A549 (cell line): ENCODE measurements at regions of chr6 and their contacts with region 1.

Region 1: DNA sequence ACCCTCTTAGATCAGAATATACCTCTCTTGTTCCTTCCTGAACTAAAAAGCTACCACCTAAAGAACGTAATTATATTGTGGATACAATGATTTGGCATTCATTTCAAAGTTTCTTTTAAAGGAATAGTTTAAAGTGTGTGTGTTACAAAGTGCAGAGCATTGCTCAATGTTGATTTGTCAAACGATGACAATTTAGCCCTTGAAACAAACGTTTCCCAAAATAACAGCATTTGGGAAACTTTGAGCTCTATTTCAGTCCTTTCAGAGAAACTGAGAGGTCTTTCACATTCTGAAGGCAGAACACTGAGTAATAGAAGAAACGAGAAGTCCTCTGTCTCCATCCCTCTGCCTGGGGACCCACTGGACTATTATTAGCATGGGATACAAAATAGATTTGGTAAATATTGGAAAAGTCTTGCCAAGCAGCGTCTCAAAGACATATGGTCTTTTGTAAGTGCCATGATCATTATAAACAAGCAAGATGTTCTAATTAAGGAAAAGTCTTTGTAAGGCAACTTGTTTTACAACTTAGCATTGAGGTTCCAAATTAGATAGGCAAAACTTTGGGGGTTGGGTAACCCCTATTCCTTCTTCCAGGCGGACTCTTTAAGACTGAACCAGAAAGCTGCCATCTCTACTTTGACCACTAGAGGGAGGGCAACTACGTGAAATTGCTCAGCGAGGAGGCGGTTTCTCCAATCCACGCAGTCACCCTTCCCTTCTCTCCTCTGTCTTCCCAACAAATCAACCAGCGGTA is 208.8 kb downstream of the RNF144B start:
- DNase-seq: peak; percentile 18 to 56
- ATAC-seq: peak; percentile 85 to 87; a peak in 5 of 6 replicates
- H3K4me3 ChIP-seq: no peak overlapping the region
- H3K27ac ChIP-seq: no peak overlapping the region
- H3K4me1 ChIP-seq: no peaks in the 10 kb centered on the region
- CTCF ChIP-seq: peak; percentile 74
- EP300 ChIP-seq: no peak
- POLR2A ChIP-seq: no peak
- RAD21 ChIP-seq: peak; percentile 77 to 79

Region 2: DNA sequence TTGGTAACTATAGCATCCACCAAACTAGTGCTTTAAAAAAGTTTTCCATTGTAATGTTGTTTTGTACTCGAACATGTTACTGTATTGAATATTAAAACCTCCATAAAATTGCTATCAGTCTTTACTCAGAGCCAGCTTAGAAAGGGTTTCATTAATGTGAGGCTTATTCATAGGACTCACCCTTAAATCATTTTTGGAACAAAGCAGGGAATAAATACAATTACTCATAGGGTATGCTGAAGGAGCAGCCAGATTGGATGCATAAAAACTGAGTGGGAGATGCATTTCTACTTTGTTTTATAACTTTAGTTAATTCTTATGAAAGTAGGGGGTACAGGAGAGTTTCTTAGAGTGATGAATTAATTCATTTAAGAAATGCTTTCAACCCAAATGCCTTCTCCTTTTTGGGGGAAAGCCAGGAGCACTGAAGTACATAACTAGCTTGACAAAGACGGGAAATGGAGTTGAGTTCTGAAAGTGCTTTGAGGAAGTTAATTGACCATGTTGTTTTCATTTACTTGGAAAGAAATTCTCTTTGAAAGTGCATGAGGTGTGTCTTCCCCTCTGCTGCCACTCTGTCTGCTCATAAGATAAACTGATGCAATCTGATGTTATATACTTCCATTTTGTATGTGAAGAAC is 118.5 kb before region 1 on chr6:
- CTCF ChIA-PET with region 1: no interaction called
- POLR2A ChIA-PET with region 1: no interaction called
- DNase-seq: no peak
- ATAC-seq: no peak
- H3K4me3 ChIP-seq: no peak overlapping the region
- H3K27ac ChIP-seq: no peak overlapping the region
- H3K4me1 ChIP-seq: no peaks in the 10 kb centered on the region
- CTCF ChIP-seq: no peak
- EP300 ChIP-seq: no peak
- POLR2A ChIP-seq: no peak
- RAD21 ChIP-seq: no peak

Region 3: DNA sequence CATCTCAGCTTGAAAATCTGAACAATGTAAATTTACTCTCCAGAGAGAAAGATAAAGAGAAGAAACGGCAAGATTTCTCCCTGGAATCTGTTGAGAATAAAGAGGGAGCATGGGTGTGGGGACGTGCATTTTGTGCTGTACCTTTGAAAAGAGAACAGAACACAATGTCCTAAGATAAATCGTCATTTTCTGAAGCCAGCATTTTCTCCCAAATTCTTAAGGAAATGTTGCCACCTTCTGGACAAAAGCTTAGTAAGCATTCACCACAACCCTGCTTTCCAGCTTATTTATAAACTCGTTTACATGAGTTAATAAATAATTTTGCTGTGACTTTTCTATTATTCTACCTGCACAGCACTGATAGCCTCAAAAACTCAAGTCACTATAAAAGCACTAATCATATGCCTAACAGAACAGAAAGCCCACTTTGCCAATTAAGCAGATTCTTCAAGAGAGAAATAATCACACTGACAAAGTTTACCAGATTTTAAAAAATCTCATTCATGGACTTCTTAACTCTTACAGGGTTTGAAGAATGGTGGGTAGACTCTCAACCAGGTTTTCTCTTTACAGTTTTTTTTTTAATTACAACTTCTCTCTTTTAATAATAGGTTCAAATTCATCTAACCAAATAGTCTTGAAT is 1460.5 kb after region 1 on chr6:
- CTCF ChIA-PET with region 1: interaction called, 14 read pairs
- POLR2A ChIA-PET with region 1: no interaction called
- DNase-seq: peak; percentile 9 to 47
- ATAC-seq: peak; percentile 50 to 61; a peak in 4 of 6 replicates
- H3K4me3 ChIP-seq: no peak overlapping the region
- H3K27ac ChIP-seq: peak overlapping the region in 1 of 2 experiments; percentile 22; a peak in 1 of 6 replicates
- H3K4me1 ChIP-seq: no peaks in the 10 kb centered on the region
- CTCF ChIP-seq: peak; percentile 60
- EP300 ChIP-seq: no peak
- POLR2A ChIP-seq: no peak
- RAD21 ChIP-seq: peak; percentile 72 to 74